Posterior vena cava (tissue), 2 donors: ENCODE measurements at regions of chr10 and their contacts with region 1.

Region 1: GRCh38 chr10:35126530-35127296 is at the start of gene CREM:
- DNase-seq: peak; percentile 99
- total RNA-seq, gene CREM: 41.6 to 43.7 TPM

Region 2: DNA sequence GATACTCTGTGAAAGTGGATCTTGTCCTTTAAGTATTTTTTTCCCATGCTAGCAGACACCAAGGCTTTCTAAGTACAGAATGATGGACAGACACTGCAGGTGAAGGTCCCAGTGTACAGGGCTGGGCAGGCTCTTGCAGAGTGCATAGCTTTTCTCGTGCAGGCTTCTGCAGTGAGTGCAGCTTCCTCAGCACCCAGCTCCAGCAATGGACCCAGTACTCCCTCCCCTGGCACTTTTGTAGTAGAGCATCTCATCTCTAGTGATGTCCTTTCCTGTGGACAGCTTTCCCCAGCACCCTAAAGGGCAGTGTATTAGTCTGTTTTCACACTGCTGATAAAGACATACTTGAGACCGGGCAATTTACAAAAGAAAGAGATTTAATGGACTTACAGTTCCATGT is 140.9 kb before region 1 on chr10:
- intact Hi-C with region 1: no loop called
- DNase-seq: no peak

Region 3: DNA sequence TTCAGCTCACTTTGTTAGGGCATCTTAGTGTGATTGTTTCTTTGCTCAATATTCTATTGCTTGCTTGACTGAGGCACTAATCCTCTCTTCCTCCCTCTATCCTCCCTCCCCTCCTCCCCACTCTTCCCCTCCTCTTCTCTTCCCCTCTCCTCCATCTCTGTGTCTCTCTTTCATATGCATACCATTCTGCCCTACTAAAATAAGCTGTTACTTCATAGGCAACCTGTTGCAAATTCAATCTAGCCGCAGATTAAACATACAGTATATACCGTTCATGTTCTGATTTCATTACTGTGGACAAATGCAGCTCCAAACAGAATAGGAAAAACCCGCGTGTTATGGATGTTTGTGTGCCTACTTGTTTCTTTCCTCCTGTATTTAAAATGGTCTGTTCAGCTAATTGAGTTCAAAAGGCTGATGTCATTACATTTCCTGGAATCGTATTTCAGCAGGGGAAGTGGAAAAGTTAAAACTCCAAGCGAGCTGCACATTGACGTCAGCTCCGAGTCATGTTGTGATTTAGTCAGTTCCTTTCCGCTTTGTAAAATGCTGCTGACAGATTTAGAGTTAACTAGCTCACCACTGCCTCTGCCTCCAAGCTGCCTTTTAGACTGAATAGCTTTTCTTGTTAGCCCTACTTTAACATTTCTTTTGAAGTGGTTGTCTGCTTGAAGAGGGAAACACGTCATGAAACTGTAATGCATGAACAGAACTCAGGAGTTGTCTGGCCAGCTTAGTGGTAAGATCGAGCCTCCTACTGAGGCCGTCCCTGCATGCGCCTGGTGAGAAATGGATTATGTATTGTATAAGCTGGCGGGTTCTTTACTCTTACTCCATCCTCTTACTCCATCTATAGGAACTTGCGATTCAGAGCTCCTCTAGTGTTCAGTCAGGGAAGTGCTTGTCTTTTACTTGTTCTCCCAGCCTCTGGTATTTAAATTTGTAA is 68.9 kb after region 1 on chr10:
- intact Hi-C with region 1: loop called in 1 of 2 experiments (anchors 5 kb)
- DNase-seq: peak; percentile 89